ENCODE measurements at regions of chr16 and their contacts with region 1.

Region 1: DNA sequence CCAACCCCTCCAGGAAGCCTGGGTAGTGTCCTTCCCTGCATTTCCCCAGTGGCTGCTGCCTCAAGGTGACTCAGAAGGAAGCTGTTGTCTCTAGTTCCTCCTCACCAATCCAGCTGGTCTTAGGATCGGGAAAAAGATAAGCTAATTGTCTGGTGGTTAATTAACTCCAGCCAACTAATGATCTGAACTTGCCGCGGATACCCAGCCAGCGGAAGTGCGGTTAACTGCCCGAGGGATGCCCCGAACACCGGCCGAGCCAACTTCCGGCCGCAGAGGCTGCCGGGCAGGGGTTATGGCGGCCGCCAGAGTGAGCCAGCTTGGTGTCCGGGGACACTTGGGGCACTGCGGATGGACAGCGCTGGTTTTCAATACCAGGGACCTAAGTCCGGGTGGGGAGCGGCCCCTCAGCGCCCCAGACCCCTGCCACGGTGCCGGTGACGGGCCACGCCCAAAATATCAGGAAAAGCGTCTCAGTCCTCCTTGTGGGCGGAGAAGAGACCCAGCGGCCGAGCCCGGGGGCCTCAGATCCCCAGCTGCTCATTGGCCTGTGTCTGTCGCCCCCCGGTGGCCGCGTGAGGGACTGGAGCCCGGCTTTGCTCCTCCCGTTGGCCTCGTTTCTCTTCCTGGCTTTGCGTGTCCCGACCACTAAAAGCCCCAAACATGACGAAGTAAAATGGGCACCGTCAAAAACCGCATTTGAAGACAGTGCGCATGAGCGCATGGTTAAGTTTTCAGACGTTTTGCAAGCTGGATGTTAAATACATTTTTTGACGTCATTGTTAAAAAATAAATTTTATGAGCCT is 10.2 kb upstream of the PRSS22 start:
- DNase-seq: peak; percentile 98
- H3K4me3 Mint-ChIP-seq: peak overlapping the region; percentile 91
- H3K27ac Mint-ChIP-seq: peak overlapping the region; percentile 91
- H3K4me1 Mint-ChIP-seq: peaks cover 10% of the 10 kb centered on the region
- H3K27me3 Mint-ChIP-seq: peaks cover 7% of the 10 kb centered on the region

Region 2: GRCh38 chr16:2438121-2438520 is 430.1 kb before region 1 on chr16:
- intact Hi-C with region 1: no loop called
- DNase-seq: no peak
- H3K4me3 Mint-ChIP-seq: no peak overlapping the region
- H3K27ac Mint-ChIP-seq: no peak overlapping the region
- H3K4me1 Mint-ChIP-seq: peaks cover 6% of the 10 kb centered on the region
- H3K27me3 Mint-ChIP-seq: no peaks in the 10 kb centered on the region

Region 3: DNA sequence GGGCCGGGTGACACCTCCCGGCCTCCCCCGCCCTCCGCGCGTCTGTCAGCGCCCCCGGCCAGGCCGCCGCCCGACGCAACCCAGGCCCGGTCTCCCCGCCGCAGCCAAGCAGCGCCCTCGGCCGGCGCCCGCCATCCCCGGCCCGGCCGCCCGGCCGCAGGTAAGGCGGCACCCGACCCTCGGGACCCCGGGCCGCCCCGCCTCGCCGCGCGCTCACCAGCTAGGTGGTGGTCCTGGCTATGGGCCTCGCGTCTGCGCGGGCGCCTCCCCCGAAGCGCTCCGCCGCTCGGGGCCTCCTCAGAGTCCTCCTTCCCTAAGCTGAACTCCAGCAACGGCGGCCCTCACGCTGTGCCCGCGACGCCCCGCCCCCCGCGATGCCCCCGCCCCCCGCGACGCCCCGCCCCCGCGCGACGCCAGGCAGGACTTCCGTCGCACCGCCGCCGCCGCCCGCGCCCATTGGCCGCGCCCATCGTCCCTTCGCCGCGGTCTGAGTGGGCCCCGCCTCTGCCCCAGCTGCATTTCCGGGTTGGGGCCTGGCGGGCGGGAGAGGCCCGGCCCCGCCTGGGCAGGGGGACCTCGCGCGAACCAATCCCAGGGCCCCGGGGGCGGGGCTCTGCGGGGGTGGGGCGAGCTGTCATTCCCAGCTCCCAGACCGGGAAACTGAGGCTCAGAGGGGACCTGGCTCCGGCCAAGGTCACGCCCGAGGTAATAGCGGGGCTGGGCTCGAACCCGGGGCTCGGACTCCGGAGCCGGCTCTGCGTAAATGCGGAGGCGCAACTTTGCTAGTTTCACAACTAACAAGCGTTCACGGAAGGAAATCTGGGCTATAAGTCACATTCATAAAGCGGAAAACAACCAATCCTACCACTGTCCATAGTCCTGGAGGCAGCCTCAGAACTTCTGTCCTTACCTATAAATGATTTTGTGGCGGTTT is 194.9 kb before region 1 on chr16:
- intact Hi-C with region 1: loop called (anchors 5 kb)
- DNase-seq: peak; percentile 99
- H3K4me3 Mint-ChIP-seq: peak overlapping the region; percentile 85
- H3K27ac Mint-ChIP-seq: peak overlapping the region; percentile 80
- H3K4me1 Mint-ChIP-seq: peaks cover 24% of the 10 kb centered on the region
- H3K27me3 Mint-ChIP-seq: no peaks in the 10 kb centered on the region

Region 4: DNA sequence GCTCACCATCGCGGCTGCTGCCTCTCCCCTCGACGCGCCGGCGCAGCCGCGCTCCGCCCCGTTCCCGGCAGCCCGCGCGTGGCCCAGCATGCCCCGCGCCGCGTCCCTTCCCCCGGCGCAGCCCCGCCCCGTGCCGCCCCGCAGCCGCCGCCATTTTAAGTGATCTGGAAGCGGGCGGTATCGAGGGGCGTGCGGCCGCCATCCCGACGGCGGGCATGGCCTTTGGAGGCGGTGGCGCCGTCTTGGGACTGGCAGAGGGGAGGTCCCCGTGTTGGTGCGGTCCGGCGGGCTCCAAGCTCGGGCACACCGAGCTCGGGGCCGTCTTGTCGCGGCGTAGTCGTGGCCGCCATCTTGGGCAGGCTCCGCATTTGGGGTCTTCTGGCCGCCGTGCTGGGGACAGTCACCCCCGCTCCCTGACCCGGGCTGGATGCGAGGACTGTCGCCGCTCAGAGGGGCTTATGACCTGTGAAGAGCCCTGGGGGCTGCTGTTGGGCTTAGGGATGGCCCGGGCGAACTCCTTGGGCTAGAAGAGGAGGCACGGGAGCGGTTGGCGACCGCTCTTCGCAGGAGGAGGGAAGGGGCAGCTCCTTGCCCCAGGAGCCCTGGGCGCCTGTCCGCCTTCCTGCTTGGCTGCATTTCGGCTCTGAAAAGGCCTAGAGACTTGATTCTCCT is 90.8 kb before region 1 on chr16 and contains the start of gene ELOB:
- intact Hi-C with region 1: loop called (anchors 5 kb)
- DNase-seq: peak; percentile 97
- H3K4me3 Mint-ChIP-seq: peak within 1 kb of the TSS; percentile 92
- H3K27ac Mint-ChIP-seq: peak within 1 kb of the TSS; percentile 95
- H3K4me1 Mint-ChIP-seq: peaks cover 25% of the 10 kb centered on the region
- H3K27me3 Mint-ChIP-seq: no peaks in the 10 kb centered on the region
- total RNA-seq, gene ELOB: 241 and 259 TPM in 2 replicates

Region 5: DNA sequence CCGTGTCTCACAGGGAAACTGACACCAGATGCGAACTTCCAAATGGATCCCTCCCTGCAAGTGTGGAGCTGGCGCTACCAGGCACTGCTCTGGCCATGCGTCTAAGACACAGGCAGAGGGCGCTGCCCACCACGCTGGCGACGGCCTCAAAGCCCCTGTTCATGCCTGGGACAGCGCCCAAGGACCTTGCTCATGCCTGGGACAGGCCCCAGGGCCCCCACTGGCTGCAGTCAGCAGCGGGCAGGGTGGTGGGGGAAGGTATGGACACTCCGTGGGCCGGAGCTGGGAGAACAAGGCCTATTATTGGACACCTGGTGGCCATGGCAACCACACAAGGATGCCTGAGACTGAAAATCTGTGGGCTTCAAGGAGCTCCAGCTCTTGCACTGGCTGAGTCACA is 29.3 kb before region 1 on chr16:
- intact Hi-C with region 1: loop called (anchors 1 kb)
- DNase-seq: peak; percentile 84
- H3K4me3 Mint-ChIP-seq: no peak overlapping the region
- H3K27ac Mint-ChIP-seq: peak overlapping the region; percentile 58
- H3K4me1 Mint-ChIP-seq: peaks cover 17% of the 10 kb centered on the region
- H3K27me3 Mint-ChIP-seq: peaks cover 2% of the 10 kb centered on the region

Region 6: DNA sequence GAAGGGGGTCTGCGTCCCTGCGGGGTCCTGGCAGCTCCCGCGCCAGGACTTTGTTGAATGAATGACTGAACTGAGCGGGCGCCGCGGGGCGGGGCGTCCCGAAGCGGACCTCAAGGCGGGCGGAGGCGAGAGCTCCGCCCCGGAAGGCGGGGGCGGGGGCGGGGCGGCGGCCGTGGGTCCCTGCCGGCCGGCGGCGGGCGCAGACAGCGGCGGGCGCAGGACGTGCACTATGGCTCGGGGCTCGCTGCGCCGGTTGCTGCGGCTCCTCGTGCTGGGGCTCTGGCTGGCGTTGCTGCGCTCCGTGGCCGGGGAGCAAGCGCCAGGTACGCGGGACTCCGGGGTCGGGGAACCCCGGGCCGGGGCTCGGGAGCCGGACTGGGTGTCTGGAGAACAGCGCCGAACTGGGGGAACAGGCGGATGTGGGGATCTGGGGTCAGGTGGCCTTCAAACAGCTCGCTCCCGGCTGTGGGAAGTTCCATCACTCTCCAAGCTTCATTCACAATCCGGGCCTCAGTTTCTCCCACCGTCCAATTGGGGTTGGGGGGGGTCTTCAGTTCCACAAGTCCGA is 152.1 kb after region 1 on chr16 and contains the start of gene TNFRSF12A:
- intact Hi-C with region 1: no loop called
- DNase-seq: peak; percentile 92
- H3K4me3 Mint-ChIP-seq: peak within 1 kb of the TSS; percentile 83
- H3K27ac Mint-ChIP-seq: peak within 1 kb of the TSS; percentile 95
- H3K4me1 Mint-ChIP-seq: peaks cover 37% of the 10 kb centered on the region
- H3K27me3 Mint-ChIP-seq: peaks cover 13% of the 10 kb centered on the region
- total RNA-seq, gene TNFRSF12A: 7.3 TPM in 2 replicates